ENCODE measurements at regions of chr3 and their contacts with region 1.

Region 1: DNA sequence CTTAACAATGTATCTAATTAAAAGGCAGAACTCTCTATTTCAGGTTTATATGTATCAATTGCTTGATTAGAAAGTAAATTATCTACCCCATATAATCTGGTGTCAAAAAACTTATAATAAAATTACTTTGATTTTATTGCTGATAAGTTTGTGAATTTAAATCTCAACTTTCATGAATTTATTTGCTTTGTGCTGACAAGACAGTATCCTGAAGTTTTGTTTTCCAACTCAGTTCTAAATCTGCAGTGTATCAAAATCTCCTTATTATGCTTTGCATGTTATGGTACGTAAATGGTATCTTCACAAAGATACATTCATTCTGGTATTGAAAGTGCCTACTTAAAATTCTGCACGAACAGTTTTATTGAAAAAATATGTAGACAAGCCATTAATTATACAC is 78.5 kb upstream of the ZNF717 start:
- DNase-seq: no peak
- H3K4me3 ChIP-seq: no peak overlapping the region
- H3K27ac ChIP-seq: no peak overlapping the region
- H3K4me1 ChIP-seq: no peaks in the 10 kb centered on the region
- H3K27me3 ChIP-seq: no peaks in the 10 kb centered on the region
- CTCF ChIP-seq: no peak

Region 2: DNA sequence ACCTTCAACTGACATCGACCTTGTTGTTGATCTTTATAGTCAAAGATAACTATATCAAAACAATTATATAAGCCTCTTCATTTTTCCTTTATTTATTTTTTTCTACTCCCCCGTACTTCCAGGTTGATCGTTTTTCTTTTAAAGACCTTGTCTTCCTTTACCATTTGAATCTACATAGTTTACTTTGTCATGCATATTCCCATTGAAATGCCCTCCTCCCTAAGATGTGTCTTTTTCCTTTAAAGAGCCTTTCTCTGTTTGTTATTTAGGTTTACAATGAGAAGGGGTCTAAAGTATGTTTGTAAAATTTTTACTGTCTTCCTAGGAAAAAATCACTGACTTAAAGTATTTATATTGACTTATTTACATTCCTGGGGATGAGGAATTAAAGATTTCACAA is 49.1 kb before region 1 on chr3:
- CTCF ChIA-PET with region 1: no interaction called
- dilution Hi-C with region 1: no loop called
- in situ Hi-C with region 1: no loop called
- intact Hi-C with region 1: no loop called
- DNase-seq: no peak
- H3K4me3 ChIP-seq: no peak overlapping the region
- H3K27ac ChIP-seq: no peak overlapping the region
- H3K4me1 ChIP-seq: no peaks in the 10 kb centered on the region
- H3K27me3 ChIP-seq: no peaks in the 10 kb centered on the region
- CTCF ChIP-seq: no peak

Region 3: DNA sequence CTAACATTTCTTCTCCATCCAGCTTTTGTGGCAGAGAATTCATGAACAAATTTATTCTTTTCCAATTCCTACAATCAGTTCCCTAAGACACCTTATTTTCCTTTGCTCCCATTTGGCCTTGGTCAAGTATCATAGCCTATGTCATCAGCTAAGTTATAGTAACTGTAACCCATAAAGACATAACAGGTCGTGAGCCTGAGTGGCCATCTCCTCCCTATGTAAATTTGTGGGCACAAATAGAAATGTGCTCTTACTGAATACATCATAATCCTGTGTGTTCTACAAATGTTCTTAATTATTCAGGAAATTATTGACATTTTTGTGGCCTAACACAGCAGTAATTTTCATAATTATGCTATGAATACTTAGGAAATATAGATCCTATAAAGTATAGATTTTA is 30.4 kb after region 1 on chr3:
- CTCF ChIA-PET with region 1: interaction called, 10 read pairs
- dilution Hi-C with region 1: no loop called
- in situ Hi-C with region 1: no loop called
- intact Hi-C with region 1: no loop called
- DNase-seq: no peak
- H3K4me3 ChIP-seq: no peak overlapping the region
- H3K27ac ChIP-seq: no peak overlapping the region
- H3K4me1 ChIP-seq: no peaks in the 10 kb centered on the region
- H3K27me3 ChIP-seq: no peaks in the 10 kb centered on the region
- CTCF ChIP-seq: no peak

Region 4: GRCh38 chr3:76138921-76139320 is 275.0 kb after region 1 on chr3:
- CTCF ChIA-PET with region 1: no interaction called
- dilution Hi-C with region 1: no loop called
- in situ Hi-C with region 1: no loop called
- intact Hi-C with region 1: no loop called
- DNase-seq: no peak
- H3K4me3 ChIP-seq: no peak overlapping the region
- H3K27ac ChIP-seq: no peak overlapping the region
- H3K4me1 ChIP-seq: no peaks in the 10 kb centered on the region
- H3K27me3 ChIP-seq: no peaks in the 10 kb centered on the region
- CTCF ChIP-seq: no peak